Sciatic nerve (tissue), 2 donors: ENCODE measurements at regions of chr6 and their contacts with region 1.

Region 1: DNA sequence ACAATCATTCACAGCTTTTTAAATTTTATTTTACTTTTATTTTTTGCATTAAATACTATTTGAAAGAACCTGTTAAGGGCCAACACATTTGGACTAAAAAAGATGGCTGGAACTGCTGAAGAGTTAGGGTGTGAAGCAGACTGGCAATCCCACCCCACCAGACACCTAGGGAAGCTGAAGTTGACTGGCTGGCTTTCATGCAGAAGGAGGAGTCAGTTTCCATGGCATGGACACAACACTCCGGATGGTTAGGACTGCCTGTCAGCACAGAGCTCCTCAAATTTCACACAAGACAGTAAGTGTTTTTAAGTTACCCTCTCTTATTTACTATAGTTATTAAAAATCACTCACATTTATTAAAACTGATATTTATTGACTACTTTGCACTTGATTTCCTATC is at the start of gene ANKRD66:
- DNase-seq: no peak
- ATAC-seq: no peak
- total RNA-seq, gene ANKRD66: not detected

Region 2: GRCh38 chr6:45822246-45822812 is 924.4 kb before region 1 on chr6:
- intact Hi-C with region 1: loop called (anchors 10 kb)
- DNase-seq: no peak
- ATAC-seq: no peak

Region 3: GRCh38 chr6:45951321-45952167 is 795.2 kb before region 1 on chr6:
- intact Hi-C with region 1: loop called (anchors 5 kb)
- DNase-seq: no peak
- ATAC-seq: peak; percentile 32

Region 4: DNA sequence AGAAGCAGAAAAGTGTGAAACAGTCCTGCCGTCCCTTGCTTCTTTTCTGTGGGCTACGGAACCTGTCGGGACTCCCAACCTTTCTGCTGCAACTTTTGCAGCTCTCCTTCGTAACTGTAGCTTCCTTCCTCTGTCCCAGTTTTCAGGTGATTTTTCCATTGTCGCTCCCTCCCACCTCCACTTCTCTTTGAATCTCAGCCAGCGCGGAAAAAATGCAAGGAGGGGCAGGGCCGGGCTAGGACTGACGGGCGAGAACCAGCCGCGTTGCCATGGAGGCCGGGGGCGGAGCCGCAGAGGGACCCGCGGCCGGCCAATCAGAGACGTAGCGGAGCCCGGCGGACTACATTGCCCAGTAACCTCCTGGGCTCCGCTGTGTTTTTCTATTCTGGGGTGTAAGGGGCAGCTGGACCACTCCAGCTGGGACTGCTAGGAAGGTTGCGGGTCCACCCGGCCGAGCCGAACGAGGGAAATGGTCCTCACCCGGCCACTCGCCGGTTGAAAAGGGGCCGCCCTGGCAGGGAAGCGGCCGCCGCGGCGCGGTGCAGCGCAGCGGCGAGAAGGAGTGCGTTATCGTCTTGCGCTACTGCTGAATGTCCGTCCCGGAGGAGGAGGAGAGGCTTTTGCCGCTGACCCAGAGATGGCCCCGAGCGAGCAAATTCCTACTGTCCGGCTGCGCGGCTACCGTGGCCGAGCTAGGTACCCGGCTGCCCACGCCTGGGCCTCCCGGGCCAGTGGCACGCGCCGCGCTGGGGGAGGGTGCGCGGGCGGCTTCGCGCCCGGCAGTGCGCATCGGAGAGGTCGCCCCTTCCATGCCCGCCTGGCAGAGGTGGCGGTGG is 93.9 kb before region 1 on chr6 and contains the starts of genes CYP39A1 and SLC25A27:
- intact Hi-C with region 1: no loop called
- DNase-seq: peak; percentile 96
- ATAC-seq: peak; percentile 100
- total RNA-seq, gene CYP39A1: 8.3 TPM
- total RNA-seq, gene SLC25A27: 49.0 TPM

Region 5: DNA sequence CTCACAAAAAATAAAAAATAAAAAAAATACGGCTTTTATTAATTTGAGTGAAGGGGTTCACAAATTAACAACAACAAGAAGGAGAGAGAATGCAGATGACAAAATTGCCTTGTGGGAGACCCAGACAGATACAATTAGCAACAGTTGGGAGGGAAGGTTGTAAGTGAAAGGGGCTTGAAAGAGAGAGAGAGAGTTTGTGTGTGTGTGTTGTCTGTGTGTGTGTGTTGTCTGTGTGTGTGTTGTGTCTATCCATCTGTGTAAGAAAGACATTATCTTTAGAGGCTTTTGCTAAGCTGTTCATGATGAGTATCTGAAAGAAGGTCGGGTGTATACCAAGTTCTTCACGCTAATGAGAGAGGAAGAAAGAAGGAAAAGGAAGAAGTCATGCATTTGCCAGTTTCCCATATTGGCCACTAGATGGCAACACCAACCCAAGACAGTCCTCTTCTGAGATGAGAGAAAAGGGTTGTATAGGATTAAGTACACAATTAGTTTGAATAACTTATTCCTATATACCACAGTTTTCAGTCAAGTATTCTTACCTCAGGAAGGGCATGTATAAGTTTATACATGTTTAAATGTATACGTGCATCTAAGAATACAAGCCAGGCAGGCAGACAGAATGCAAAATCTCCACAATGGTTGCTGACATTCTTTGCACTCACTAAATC is 667.2 kb after region 1 on chr6:
- intact Hi-C with region 1: no loop called
- DNase-seq: no peak
- ATAC-seq: peak; percentile 91